Naive thymus-derived CD4-positive, alpha-beta T cell (primary cell): ENCODE measurements at regions of chr14 and their contacts with region 1.

Region 1: DNA sequence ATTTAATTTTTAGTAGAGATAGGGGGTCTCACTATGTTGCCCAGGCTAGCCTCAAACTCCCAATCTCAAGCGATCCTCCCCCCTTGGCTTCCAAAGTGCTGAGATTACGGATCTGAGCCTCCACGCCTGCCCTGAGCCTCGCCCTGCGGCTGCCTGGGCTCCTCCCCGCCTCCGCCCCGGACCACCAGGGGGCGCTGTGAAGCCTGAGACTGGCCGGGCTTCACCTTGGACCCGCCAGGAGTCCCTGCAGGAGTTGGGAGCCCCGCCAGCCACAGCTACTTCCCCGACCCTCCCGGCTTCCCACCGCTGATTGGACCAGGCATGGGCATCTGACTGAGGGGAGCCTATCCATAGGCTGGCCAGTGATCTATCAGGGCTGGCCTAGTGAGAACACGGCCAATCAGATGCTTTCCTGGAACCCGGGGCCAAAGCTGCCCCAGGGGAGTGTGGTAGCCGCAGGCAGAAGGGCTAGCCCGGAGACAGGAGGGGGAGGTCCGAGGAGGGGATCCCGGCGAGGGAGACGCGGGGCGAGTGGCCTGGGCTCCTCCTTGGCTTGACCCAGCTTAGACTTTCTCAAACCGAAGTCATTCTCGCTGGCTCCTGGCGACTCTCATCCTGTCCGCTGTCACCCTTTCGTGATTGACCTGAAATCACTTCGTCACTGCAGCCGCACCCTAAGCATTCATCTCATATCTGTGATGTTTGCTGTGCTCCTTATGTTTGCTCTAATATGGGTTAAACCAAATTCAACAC is 15.1 kb upstream of the ANKRD9 start:
- DNase-seq: peak; percentile 75 to 99 (median 86)
- ATAC-seq: peak; percentile 92
- H3K4me3 ChIP-seq: peak overlapping the region; percentile 69
- H3K4me3 Mint-ChIP-seq: peak overlapping the region; percentile 73 to 90 (median 85)
- H3K27ac ChIP-seq: peak overlapping the region; percentile 60
- H3K27ac Mint-ChIP-seq: peak overlapping the region; percentile 21 to 94 (median 78)
- H3K4me1 ChIP-seq: peaks cover 16 to 18% of the 10 kb centered on the region in 2 donors
- H3K4me1 Mint-ChIP-seq: peaks cover 20 to 32% (median 29%) of the 10 kb centered on the region in 7 donors
- H3K27me3 ChIP-seq: no peaks in the 10 kb centered on the region
- H3K27me3 Mint-ChIP-seq: no peaks in the 10 kb centered on the region

Region 2: DNA sequence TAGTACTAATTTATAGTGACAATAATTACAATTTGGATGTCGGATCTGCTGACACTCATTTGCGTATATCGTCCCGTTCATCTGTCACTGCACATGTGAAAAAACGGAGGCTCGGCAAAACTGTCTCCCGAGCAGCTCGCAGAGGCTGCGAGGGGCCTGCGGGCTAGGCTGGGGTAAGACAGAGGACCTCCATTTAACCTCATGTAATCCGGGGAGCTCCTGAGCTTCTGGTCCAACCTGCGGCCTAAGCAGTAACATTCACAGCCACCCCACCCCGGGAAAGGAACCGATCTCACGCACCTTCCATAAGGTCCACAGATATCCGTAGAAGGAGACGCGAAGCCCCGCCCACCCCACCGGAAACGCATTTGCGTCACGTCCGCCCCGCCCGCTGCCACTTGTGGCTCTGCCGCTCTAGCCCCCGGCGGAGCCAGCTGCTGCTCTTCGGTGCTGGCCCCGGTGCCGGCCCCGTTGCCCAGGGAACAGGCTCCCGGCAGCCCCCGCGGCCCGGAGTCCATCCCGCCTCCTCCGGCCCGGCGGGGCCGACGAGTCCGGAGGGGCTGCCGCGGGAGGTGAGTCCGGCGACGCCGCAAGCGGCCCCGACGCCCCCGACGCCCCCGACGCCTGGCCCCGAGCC is 162.0 kb before region 1 on chr14 and contains the starts of genes CINP and TECPR2:
- CTCF ChIA-PET with region 1: no interaction called
- POLR2A ChIA-PET with region 1: no interaction called
- intact Hi-C with region 1: loop called (anchors 2 to 5 kb)
- DNase-seq: peak; percentile 88 to 95 (median 92)
- ATAC-seq: peak; percentile 97
- H3K4me3 ChIP-seq: peak within 1 kb of the TSS; percentile 96
- H3K4me3 Mint-ChIP-seq: peak within 1 kb of the TSS in 6 of 10 donors; percentile 92 to 97 (median 95)
- H3K27ac ChIP-seq: peak within 1 kb of the TSS; percentile 87
- H3K27ac Mint-ChIP-seq: peak within 1 kb of the TSS; percentile 82 to 99 (median 96)
- H3K4me1 ChIP-seq: peaks cover 6 to 15% of the 10 kb centered on the region in 2 donors
- H3K4me1 Mint-ChIP-seq: peaks cover 17 to 42% (median 36%) of the 10 kb centered on the region in 7 donors
- H3K27me3 ChIP-seq: no peaks in the 10 kb centered on the region
- H3K27me3 Mint-ChIP-seq: no peaks in the 10 kb centered on the region
- total RNA-seq, gene CINP: 16.8 to 34.4 (median 31.8) TPM
- total RNA-seq, gene TECPR2: 8.7 to 12.9 (median 11.4) TPM

Region 3: GRCh38 chr14:102509744-102510615 is 14.7 kb before region 1 on chr14 and contains the start of gene ANKRD9:
- CTCF ChIA-PET with region 1: interaction called, 6 read pairs
- POLR2A ChIA-PET with region 1: interaction called, 3 read pairs
- intact Hi-C with region 1: loop called (anchors 2 kb)
- DNase-seq: peak; percentile 48 to 94 (median 66)
- ATAC-seq: peak; percentile 83
- H3K4me3 ChIP-seq: peak within 1 kb of the TSS; percentile 75
- H3K4me3 Mint-ChIP-seq: peak within 1 kb of the TSS; percentile 85 to 91 (median 88)
- H3K27ac ChIP-seq: peak within 1 kb of the TSS; percentile 58
- H3K27ac Mint-ChIP-seq: peak within 1 kb of the TSS in 8 of 9 donors; percentile 20 to 74 (median 59)
- H3K4me1 ChIP-seq: peaks cover 4 to 14% of the 10 kb centered on the region in 2 donors
- H3K4me1 Mint-ChIP-seq: peaks cover 0 to 21% (median 10%) of the 10 kb centered on the region in 7 donors
- H3K27me3 ChIP-seq: no peaks in the 10 kb centered on the region
- H3K27me3 Mint-ChIP-seq: peaks cover 0 to 3% (median 0%) of the 10 kb centered on the region in 5 donors
- total RNA-seq, gene ANKRD9: 1.1 to 8.1 (median 2.2) TPM

Region 4: GRCh38 chr14:102555264-102555831 is 30.7 kb after region 1 on chr14:
- CTCF ChIA-PET with region 1: no interaction called
- POLR2A ChIA-PET with region 1: no interaction called
- intact Hi-C with region 1: loop called (anchors 1 to 2 kb)
- DNase-seq: peak; percentile 46 to 67 (median 60)
- ATAC-seq: peak; percentile 91
- H3K4me3 ChIP-seq: peak overlapping the region; percentile 74
- H3K4me3 Mint-ChIP-seq: peak overlapping the region; percentile 66 to 87 (median 78)
- H3K27ac ChIP-seq: peak overlapping the region; percentile 93
- H3K27ac Mint-ChIP-seq: peak overlapping the region; percentile 54 to 89 (median 78)
- H3K4me1 ChIP-seq: peaks cover 0 to 7% of the 10 kb centered on the region in 2 donors
- H3K4me1 Mint-ChIP-seq: peaks cover 0 to 4% (median 0%) of the 10 kb centered on the region in 7 donors
- H3K27me3 ChIP-seq: no peaks in the 10 kb centered on the region
- H3K27me3 Mint-ChIP-seq: peaks cover 0 to 3% (median under 1%) of the 10 kb centered on the region in 5 donors

Region 5: GRCh38 chr14:102568114-102568621 is 43.5 kb after region 1 on chr14:
- CTCF ChIA-PET with region 1: no interaction called
- POLR2A ChIA-PET with region 1: no interaction called
- intact Hi-C with region 1: loop called in 1 of 2 experiments (anchors 2 kb)
- DNase-seq: peak in 8 of 9 donors; percentile 26 to 57 (median 46)
- ATAC-seq: no peak
- H3K4me3 ChIP-seq: peak overlapping the region; percentile 10
- H3K4me3 Mint-ChIP-seq: peak overlapping the region; percentile 55 to 85 (median 74)
- H3K27ac ChIP-seq: peak overlapping the region; percentile 41
- H3K27ac Mint-ChIP-seq: peak overlapping the region; percentile 81 to 95 (median 94)
- H3K4me1 ChIP-seq: peaks cover 0 to 14% of the 10 kb centered on the region in 2 donors
- H3K4me1 Mint-ChIP-seq: peaks cover 10 to 20% (median 15%) of the 10 kb centered on the region in 7 donors
- H3K27me3 ChIP-seq: no peaks in the 10 kb centered on the region
- H3K27me3 Mint-ChIP-seq: no peaks in the 10 kb centered on the region

Region 6: GRCh38 chr14:102917469-102918211 is 393.0 kb after region 1 on chr14:
- CTCF ChIA-PET with region 1: no interaction called
- POLR2A ChIA-PET with region 1: no interaction called
- intact Hi-C with region 1: loop called in 1 of 2 experiments (anchors 2 kb)
- DNase-seq: peak in 7 of 9 donors; percentile 36 to 58 (median 45)
- ATAC-seq: peak; percentile 58
- H3K4me3 ChIP-seq: no peak overlapping the region
- H3K4me3 Mint-ChIP-seq: no peak overlapping the region
- H3K27ac ChIP-seq: no peak overlapping the region
- H3K27ac Mint-ChIP-seq: peak overlapping the region in 3 of 9 donors; percentile 39 to 75 (median 71)
- H3K4me1 ChIP-seq: no peaks in the 10 kb centered on the region
- H3K4me1 Mint-ChIP-seq: peaks cover 0 to 2% (median 0%) of the 10 kb centered on the region in 7 donors
- H3K27me3 ChIP-seq: no peaks in the 10 kb centered on the region
- H3K27me3 Mint-ChIP-seq: no peaks in the 10 kb centered on the region

Region 7: GRCh38 chr14:103091041-103091882 is 566.6 kb after region 1 on chr14:
- CTCF ChIA-PET with region 1: interaction called, 3 read pairs
- POLR2A ChIA-PET with region 1: no interaction called
- intact Hi-C with region 1: loop called in 1 of 2 experiments (anchors 2 kb)
- DNase-seq: peak; percentile 38 to 80 (median 64)
- ATAC-seq: peak; percentile 94
- H3K4me3 ChIP-seq: peak overlapping the region; percentile 43
- H3K4me3 Mint-ChIP-seq: peak overlapping the region; percentile 14 to 80 (median 62)
- H3K27ac ChIP-seq: no peak overlapping the region
- H3K27ac Mint-ChIP-seq: no peak overlapping the region
- H3K4me1 ChIP-seq: no peaks in the 10 kb centered on the region
- H3K4me1 Mint-ChIP-seq: peaks cover 0 to 3% (median 0%) of the 10 kb centered on the region in 7 donors
- H3K27me3 ChIP-seq: no peaks in the 10 kb centered on the region
- H3K27me3 Mint-ChIP-seq: peaks cover 0 to 11% (median 5%) of the 10 kb centered on the region in 5 donors

Region 8: GRCh38 chr14:103260620-103261124 is 736.0 kb after region 1 on chr14:
- CTCF ChIA-PET with region 1: no interaction called
- POLR2A ChIA-PET with region 1: no interaction called
- intact Hi-C with region 1: no loop called
- DNase-seq: no peak
- ATAC-seq: no peak
- H3K4me3 ChIP-seq: peak overlapping the region; percentile 16
- H3K4me3 Mint-ChIP-seq: peak overlapping the region in 9 of 10 donors; percentile 37 to 78 (median 66)
- H3K27ac ChIP-seq: no peak overlapping the region
- H3K27ac Mint-ChIP-seq: peak overlapping the region in 1 of 9 donors; percentile 76
- H3K4me1 ChIP-seq: no peaks in the 10 kb centered on the region
- H3K4me1 Mint-ChIP-seq: peaks cover 4 to 10% (median 9%) of the 10 kb centered on the region in 7 donors
- H3K27me3 ChIP-seq: no peaks in the 10 kb centered on the region
- H3K27me3 Mint-ChIP-seq: peaks cover 8 to 36% (median 25%) of the 10 kb centered on the region in 5 donors